Activated naive CD8-positive, alpha-beta T cell treated with anti-CD3 and anti-CD28 coated beads, Interleukin-2, amount 10 ng/mL, durations not matched to agents 7 days and 5 days (primary cell): ENCODE measurements at regions of chr22 and their contacts with region 1.

Region 1: GRCh38 chr22:31080848-31081649 is at the start of gene SMTN:
- DNase-seq: peak; percentile 96
- ATAC-seq: peak; percentile 68
- H3K4me3 Mint-ChIP-seq: peak within 1 kb of the TSS; percentile 91
- H3K27ac Mint-ChIP-seq: peak within 1 kb of the TSS; percentile 85
- H3K4me1 Mint-ChIP-seq: peaks cover 31% of the 10 kb centered on the region
- H3K27me3 Mint-ChIP-seq: no peaks in the 10 kb centered on the region
- total RNA-seq, gene SMTN: 39.9 to 45.8 TPM

Region 2: GRCh38 chr22:30920407-30920806 is 160.6 kb before region 1 on chr22:
- POLR2A ChIA-PET with region 1: interaction called, 12 read pairs
- DNase-seq: peak; percentile 87
- ATAC-seq: peak; percentile 62
- H3K4me3 Mint-ChIP-seq: peak overlapping the region; percentile 60
- H3K27ac Mint-ChIP-seq: no peak overlapping the region
- H3K4me1 Mint-ChIP-seq: peaks cover 13% of the 10 kb centered on the region
- H3K27me3 Mint-ChIP-seq: no peaks in the 10 kb centered on the region

Region 3: DNA sequence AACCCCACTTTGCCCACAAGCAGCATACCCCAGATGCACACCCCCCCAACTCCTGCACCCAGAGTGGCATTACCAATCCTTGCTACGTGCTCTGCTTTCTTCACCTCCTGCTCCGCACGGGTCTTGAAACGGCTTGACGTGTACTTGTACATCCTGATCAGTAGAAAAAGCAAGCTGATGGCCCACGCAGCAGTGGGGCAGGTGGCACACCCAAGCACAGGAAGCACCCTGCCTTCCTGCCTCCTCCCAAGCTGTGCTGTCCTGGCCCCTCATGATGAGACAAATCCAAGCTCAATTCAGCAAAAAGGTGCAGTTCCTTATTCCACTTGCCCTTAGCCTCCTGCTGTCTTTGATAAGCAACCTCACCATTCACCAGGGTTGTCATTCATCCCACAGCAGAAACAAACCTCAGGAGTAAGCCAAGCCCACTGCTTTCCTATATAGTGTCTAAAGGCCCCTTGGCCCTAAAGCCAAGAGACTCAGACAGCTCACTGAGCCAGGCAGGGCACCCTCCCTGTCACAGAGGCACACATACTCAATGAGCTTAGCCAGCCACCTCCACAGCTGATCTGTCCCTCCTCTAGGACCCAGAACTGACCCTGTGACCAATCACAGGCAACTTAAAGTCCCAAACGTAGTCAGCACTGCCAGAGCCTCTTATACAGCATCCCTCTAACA is 140.2 kb before region 1 on chr22:
- POLR2A ChIA-PET with region 1: interaction called, 17 read pairs
- DNase-seq: peak; percentile 50
- ATAC-seq: peak; percentile 72
- H3K4me3 Mint-ChIP-seq: peak overlapping the region; percentile 76
- H3K27ac Mint-ChIP-seq: peak overlapping the region; percentile 95
- H3K4me1 Mint-ChIP-seq: peaks cover 46% of the 10 kb centered on the region
- H3K27me3 Mint-ChIP-seq: no peaks in the 10 kb centered on the region

Region 4: DNA sequence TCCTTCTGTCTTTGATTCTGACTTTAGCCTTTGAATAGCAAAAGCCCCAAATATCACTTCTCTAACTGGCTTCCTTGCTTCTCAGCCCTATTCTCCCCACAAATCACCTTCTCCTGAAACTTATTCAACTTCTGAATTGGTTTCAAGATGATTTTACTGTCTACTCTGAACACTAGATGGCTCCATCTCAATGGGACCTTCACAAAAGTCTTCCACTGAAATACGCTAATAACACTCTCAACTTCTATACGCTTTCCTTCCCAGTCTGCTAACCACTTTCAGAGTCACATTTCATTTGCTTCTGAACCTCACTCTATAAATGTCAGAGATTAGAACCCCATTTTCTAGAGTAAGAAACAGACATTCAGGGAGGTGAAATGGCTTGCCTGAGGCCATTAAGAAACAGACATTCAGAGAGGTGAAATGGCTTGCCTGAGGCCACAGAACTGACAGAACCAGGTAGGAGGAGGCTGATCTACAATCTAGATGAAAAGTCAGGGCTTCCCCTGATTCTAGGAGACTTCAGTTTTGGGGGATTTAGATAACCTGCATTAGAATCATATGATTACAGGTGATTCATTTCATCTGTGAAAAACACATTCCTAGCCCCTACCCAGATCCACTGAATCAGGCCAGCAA is 133.1 kb before region 1 on chr22:
- POLR2A ChIA-PET with region 1: interaction called, 17 read pairs
- DNase-seq: no peak
- ATAC-seq: no peak
- H3K4me3 Mint-ChIP-seq: no peak overlapping the region
- H3K27ac Mint-ChIP-seq: no peak overlapping the region
- H3K4me1 Mint-ChIP-seq: peaks cover 40% of the 10 kb centered on the region
- H3K27me3 Mint-ChIP-seq: no peaks in the 10 kb centered on the region